ENCODE measurements at regions of chr21 and their contacts with region 1.

Region 1: DNA sequence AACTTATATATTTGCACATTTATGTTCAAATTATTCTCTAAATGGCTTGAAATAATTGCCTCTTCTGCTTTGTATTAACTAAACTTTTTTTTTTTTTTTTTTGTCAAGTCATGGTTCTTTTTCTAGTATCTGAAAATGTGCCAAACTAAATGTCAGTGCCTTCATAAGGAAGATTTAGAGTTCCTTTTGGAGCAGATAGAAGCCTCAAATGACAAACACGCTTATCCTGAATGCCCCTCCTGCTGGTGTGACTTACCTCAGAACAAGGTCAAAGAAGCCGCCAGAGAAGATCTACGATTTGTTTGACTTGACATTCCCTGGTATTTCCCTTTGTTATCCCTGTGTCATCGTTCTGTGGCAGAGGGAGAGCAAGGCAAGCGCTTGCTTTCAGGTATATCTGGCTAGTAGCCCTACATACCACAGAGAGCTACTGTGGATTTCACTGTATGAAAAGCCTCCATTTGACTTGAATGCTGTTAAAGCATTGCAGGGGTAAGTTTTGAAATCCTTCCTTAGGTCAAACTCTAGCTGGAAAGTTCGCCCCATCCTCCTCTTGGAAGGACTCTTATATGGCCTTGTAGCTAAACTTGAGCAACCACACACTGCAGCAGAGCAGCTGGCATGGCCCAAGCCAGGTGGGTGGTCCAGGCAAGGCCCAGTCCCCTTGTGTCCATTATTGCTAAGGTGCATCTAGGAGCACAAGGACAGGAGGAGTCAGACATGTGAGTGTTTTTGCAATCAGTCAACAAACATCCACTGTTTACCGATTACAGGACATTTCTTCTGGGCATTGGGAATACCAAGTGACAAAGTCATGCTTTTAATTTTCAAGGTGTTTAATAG is 285.4 kb upstream of the USP25 start:
- DNase-seq: peak; percentile 69 to 76
- H3K4me3 ChIP-seq: no peak overlapping the region
- H3K4me3 Mint-ChIP-seq: no peak overlapping the region
- H3K27ac Mint-ChIP-seq: peak overlapping the region; percentile 29
- H3K4me1 ChIP-seq: peaks cover 39% of the 10 kb centered on the region
- H3K4me1 Mint-ChIP-seq: peaks cover 28% of the 10 kb centered on the region
- H3K27me3 ChIP-seq: no peaks in the 10 kb centered on the region
- H3K27me3 Mint-ChIP-seq: no peaks in the 10 kb centered on the region
- CTCF ChIP-seq: no peak

Region 2: GRCh38 chr21:15293240-15293639 is 151.1 kb before region 1 on chr21:
- CTCF ChIA-PET with region 1: no interaction called
- POLR2A ChIA-PET with region 1: no interaction called
- intact Hi-C with region 1: loop called (anchors 5 kb)
- DNase-seq: peak; percentile 45 to 59
- H3K4me3 ChIP-seq: no peak overlapping the region
- H3K4me3 Mint-ChIP-seq: peak overlapping the region; percentile 6
- H3K27ac Mint-ChIP-seq: peak overlapping the region; percentile 50
- H3K4me1 ChIP-seq: peaks cover 40% of the 10 kb centered on the region
- H3K4me1 Mint-ChIP-seq: peaks cover 34% of the 10 kb centered on the region
- H3K27me3 ChIP-seq: no peaks in the 10 kb centered on the region
- H3K27me3 Mint-ChIP-seq: no peaks in the 10 kb centered on the region
- CTCF ChIP-seq: no peak

Region 3: GRCh38 chr21:15408089-15408488 is 36.2 kb before region 1 on chr21:
- CTCF ChIA-PET with region 1: no interaction called
- POLR2A ChIA-PET with region 1: no interaction called
- intact Hi-C with region 1: no loop called
- DNase-seq: no peak
- H3K4me3 ChIP-seq: no peak overlapping the region
- H3K4me3 Mint-ChIP-seq: no peak overlapping the region
- H3K27ac Mint-ChIP-seq: no peak overlapping the region
- H3K4me1 ChIP-seq: no peaks in the 10 kb centered on the region
- H3K4me1 Mint-ChIP-seq: no peaks in the 10 kb centered on the region
- H3K27me3 ChIP-seq: no peaks in the 10 kb centered on the region
- H3K27me3 Mint-ChIP-seq: no peaks in the 10 kb centered on the region
- CTCF ChIP-seq: no peak

Measured in Caco-2 (cell line).